CD8-positive, alpha-beta T cell (primary cell): ENCODE measurements at regions of chr11 and their contacts with region 1.

Region 1: GRCh38 chr11:80007616-80008015 is 566.8 kb upstream of the TENM4 start:
- DNase-seq: no peak
- ATAC-seq: no peak
- H3K4me3 ChIP-seq: no peak overlapping the region
- H3K4me3 Mint-ChIP-seq: no peak overlapping the region
- H3K27ac ChIP-seq: no peak overlapping the region
- H3K27ac Mint-ChIP-seq: no peak overlapping the region
- H3K4me1 ChIP-seq: no peaks in the 10 kb centered on the region
- H3K4me1 Mint-ChIP-seq: no peaks in the 10 kb centered on the region
- H3K27me3 ChIP-seq: no peaks in the 10 kb centered on the region
- H3K27me3 Mint-ChIP-seq: no peaks in the 10 kb centered on the region
- CTCF ChIP-seq: no peak

Region 2: GRCh38 chr11:79925570-79925969 is 82.0 kb before region 1 on chr11:
- CTCF ChIA-PET with region 1: no interaction called
- POLR2A ChIA-PET with region 1: no interaction called
- intact Hi-C with region 1: no loop called
- DNase-seq: no peak
- ATAC-seq: no peak
- H3K4me3 ChIP-seq: no peak overlapping the region
- H3K4me3 Mint-ChIP-seq: no peak overlapping the region
- H3K27ac ChIP-seq: no peak overlapping the region
- H3K27ac Mint-ChIP-seq: no peak overlapping the region
- H3K4me1 ChIP-seq: no peaks in the 10 kb centered on the region
- H3K4me1 Mint-ChIP-seq: no peaks in the 10 kb centered on the region
- H3K27me3 ChIP-seq: no peaks in the 10 kb centered on the region
- H3K27me3 Mint-ChIP-seq: no peaks in the 10 kb centered on the region
- CTCF ChIP-seq: no peak

Region 3: GRCh38 chr11:79940151-79940550 is 67.5 kb before region 1 on chr11:
- CTCF ChIA-PET with region 1: no interaction called
- POLR2A ChIA-PET with region 1: no interaction called
- intact Hi-C with region 1: loop called in 1 of 2 experiments (anchors 10 kb)
- DNase-seq: no peak
- ATAC-seq: no peak
- H3K4me3 ChIP-seq: no peak overlapping the region
- H3K4me3 Mint-ChIP-seq: no peak overlapping the region
- H3K27ac ChIP-seq: no peak overlapping the region
- H3K27ac Mint-ChIP-seq: no peak overlapping the region
- H3K4me1 ChIP-seq: no peaks in the 10 kb centered on the region
- H3K4me1 Mint-ChIP-seq: no peaks in the 10 kb centered on the region
- H3K27me3 ChIP-seq: no peaks in the 10 kb centered on the region
- H3K27me3 Mint-ChIP-seq: no peaks in the 10 kb centered on the region
- CTCF ChIP-seq: no peak

Region 4: DNA sequence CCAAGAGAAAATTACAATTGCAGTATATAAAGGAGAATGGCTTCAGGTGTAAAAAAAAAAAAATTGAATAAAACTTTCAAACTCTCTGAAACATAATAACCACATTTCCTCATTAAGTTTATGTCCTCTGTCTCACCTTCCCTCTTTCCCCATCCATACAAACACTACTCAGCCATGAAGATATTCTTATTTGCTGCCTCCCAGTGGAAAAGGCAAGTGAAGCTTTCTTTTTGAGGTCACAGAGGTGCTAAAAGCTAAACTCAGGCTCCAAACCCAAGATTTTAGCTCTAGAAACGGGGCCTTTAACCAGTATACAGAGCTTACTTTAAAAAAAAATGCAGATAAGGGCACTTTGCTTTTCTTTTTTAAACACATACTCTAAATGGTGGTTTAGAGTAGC is 1157.5 kb after region 1 on chr11:
- CTCF ChIA-PET with region 1: no interaction called
- POLR2A ChIA-PET with region 1: no interaction called
- intact Hi-C with region 1: no loop called
- DNase-seq: no peak
- ATAC-seq: no peak
- H3K4me3 ChIP-seq: no peak overlapping the region
- H3K4me3 Mint-ChIP-seq: no peak overlapping the region
- H3K27ac ChIP-seq: no peak overlapping the region
- H3K27ac Mint-ChIP-seq: no peak overlapping the region
- H3K4me1 ChIP-seq: no peaks in the 10 kb centered on the region
- H3K4me1 Mint-ChIP-seq: no peaks in the 10 kb centered on the region
- H3K27me3 ChIP-seq: no peaks in the 10 kb centered on the region
- H3K27me3 Mint-ChIP-seq: no peaks in the 10 kb centered on the region
- CTCF ChIP-seq: no peak